GM13976 (cell line): ENCODE measurements at regions of chr13 and their contacts with region 1.

Region 1: GRCh38 chr13:20924758-20925394 is 22.3 kb upstream of the XPO4 start:
- DNase-seq: peak; percentile 66
- CTCF ChIP-seq: peak; percentile 62

Region 2: GRCh38 chr13:20495082-20496023 is 429.5 kb before region 1 on chr13:
- in situ Hi-C with region 1: loop called (anchors 10 kb)
- DNase-seq: peak; percentile 72
- CTCF ChIP-seq: peak; percentile 89

Region 3: GRCh38 chr13:20703780-20704445 is 221.0 kb before region 1 on chr13:
- in situ Hi-C with region 1: loop called (anchors 10 kb)
- DNase-seq: peak; percentile 92
- CTCF ChIP-seq: peak; percentile 73